B cell (primary cell): ENCODE measurements at regions of chr16 and their contacts with region 1.

Region 1: GRCh38 chr16:85610508-85611332 is 2.4 kb upstream of the GSE1 start:
- DNase-seq: peak; percentile 88
- ATAC-seq: peak; percentile 53
- H3K4me3 ChIP-seq: peak overlapping the region in 4 of 5 experiments; percentile 22 to 71 (median 64)
- H3K4me3 Mint-ChIP-seq: peak overlapping the region; percentile 90
- H3K27ac ChIP-seq: no peak overlapping the region
- H3K27ac Mint-ChIP-seq: peak overlapping the region; percentile 87
- H3K4me1 ChIP-seq: peaks cover 55 to 63% of the 10 kb centered on the region in 2 donors
- H3K4me1 Mint-ChIP-seq: peaks cover 59% of the 10 kb centered on the region
- H3K27me3 ChIP-seq: no peaks in the 10 kb centered on the region
- H3K27me3 Mint-ChIP-seq: no peaks in the 10 kb centered on the region
- CTCF ChIP-seq: peak; percentile 96

Region 2: DNA sequence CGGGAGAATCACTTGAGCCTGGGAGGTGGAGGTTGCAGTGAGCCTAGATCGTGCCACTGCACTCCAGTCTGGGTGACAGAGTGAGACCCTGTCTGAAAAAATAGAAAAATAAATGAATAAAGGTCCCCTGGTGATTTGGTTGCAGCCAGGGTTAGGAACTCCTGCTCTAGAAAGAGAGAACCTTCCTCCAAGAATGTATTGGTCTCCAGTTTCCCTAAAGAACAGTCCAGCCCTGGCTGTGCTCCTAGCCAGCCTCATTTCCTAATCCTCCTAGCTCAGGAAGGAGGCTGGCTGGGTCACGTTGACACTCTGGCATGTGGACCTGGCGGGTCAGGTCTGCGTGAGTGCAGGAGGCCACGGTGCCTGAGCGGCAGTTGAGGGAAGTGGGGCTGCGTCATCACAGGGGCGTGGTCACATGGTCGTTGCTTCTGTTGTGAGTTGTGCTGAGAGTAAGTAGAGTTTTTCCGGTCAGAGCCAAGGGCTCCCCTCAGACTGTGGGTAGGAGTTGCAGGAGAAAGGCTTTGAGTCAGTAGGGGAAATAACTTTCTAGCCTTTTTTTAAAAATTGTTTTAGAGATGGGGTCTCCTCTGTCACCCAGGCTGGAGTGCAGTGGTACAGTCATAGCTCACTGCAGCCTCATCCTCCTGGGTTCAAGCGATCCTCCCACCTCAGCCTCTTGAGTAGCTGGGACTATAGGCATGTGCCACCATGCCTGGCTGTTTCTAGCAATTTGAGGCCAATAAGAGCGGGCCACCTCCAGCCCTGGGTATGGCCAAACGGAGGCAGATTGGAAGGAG is 304.5 kb before region 1 on chr16:
- CTCF ChIA-PET with region 1: interaction called, 8 read pairs
- POLR2A ChIA-PET with region 1: no interaction called
- intact Hi-C with region 1: loop called (anchors 1 kb)
- DNase-seq: peak; percentile 91
- ATAC-seq: peak; percentile 71
- H3K4me3 ChIP-seq: peak overlapping the region in 1 of 5 experiments; percentile 22
- H3K4me3 Mint-ChIP-seq: peak overlapping the region; percentile 61
- H3K27ac ChIP-seq: peak overlapping the region; percentile 51
- H3K27ac Mint-ChIP-seq: peak overlapping the region; percentile 91
- H3K4me1 ChIP-seq: peaks cover 77 to 84% of the 10 kb centered on the region in 2 donors
- H3K4me1 Mint-ChIP-seq: peaks cover 59% of the 10 kb centered on the region
- H3K27me3 ChIP-seq: peaks cover 0 to 5% (median 0%) of the 10 kb centered on the region in 4 experiments
- H3K27me3 Mint-ChIP-seq: no peaks in the 10 kb centered on the region
- CTCF ChIP-seq: no peak

Region 3: DNA sequence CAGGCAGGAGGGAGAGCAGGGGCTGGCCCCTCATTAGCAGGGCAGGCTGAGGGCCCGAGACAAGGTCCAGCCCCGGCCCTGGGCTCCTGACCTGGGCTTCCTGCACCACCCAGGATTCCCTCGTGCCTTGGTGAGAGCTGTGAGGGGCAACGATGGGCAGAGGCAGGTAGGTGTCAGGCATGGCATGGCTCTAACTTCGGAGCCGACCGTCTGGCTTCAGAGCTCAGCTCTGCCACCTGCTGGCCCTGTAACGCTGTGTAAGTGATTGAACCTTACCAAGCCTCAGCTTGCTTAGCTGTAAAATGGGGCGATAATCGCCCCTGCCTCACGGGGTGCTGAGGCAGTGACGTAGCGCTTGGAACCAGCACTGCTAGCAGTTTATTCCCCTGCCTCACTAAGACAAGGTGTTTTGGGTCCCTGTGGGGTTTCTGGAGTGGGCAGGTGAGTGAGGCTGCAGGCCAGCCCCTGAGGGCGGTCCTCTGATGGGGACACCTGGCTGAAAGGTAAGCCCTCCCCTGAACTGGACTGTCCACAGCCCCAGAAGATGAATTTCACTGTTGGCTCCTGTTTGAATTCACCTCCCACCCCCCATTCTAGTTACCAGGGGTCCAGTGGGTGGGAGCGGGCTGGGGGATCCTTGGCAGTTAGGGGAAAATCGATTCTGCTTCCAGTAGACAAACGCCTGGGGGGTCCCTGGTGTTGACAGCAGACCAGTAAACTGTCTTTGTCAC is 182.4 kb before region 1 on chr16:
- CTCF ChIA-PET with region 1: interaction called, 46 read pairs
- POLR2A ChIA-PET with region 1: no interaction called
- intact Hi-C with region 1: no loop called
- DNase-seq: peak; percentile 62
- ATAC-seq: peak; percentile 76
- H3K4me3 ChIP-seq: no peak overlapping the region
- H3K4me3 Mint-ChIP-seq: no peak overlapping the region
- H3K27ac ChIP-seq: no peak overlapping the region
- H3K27ac Mint-ChIP-seq: no peak overlapping the region
- H3K4me1 ChIP-seq: no peaks in the 10 kb centered on the region
- H3K4me1 Mint-ChIP-seq: no peaks in the 10 kb centered on the region
- H3K27me3 ChIP-seq: peaks cover 0 to 8% (median 0%) of the 10 kb centered on the region in 4 experiments
- H3K27me3 Mint-ChIP-seq: peaks cover 24% of the 10 kb centered on the region
- CTCF ChIP-seq: peak; percentile 69

Region 4: DNA sequence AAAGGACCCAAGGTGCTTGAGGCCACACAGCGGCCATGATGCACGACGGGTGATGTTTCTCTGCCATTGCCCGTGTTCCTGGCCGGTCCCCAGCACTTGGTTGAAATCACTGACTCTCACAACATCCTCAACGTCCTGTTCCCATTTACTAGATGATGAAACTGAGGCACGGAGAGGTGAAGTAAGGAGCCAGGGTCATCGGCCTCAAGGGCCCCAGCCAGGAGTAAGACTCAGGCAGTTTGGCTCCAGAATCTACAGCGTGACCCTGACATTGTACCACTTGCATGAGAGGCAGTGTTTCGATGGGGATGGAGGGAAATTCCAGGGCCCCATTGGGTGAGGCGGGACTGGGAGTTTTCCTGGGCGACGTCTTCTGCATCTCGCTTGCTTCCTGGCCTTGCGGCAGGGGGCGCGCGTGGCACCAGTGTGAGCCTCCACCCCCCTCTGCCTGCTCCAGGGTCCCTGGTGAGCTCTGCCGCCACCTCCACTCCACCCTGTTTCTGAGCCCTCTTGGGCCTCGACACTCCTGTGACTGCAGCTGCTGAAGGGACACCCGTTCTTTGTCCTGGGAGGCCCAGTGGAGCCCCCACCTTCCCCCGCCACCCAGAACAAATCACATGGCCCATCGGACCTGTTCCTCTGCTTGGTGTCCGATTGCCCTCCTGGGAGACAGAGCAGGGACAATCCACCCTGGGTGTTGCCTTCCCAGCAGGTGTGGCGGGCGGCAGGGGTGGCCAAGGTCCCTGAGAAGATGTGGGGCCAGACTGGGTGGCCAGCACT is 130.6 kb before region 1 on chr16:
- CTCF ChIA-PET with region 1: interaction called, 81 read pairs
- POLR2A ChIA-PET with region 1: interaction called, 4 read pairs
- intact Hi-C with region 1: loop called (anchors 1 kb)
- DNase-seq: peak; percentile 72
- ATAC-seq: peak; percentile 70
- H3K4me3 ChIP-seq: no peak overlapping the region
- H3K4me3 Mint-ChIP-seq: peak overlapping the region; percentile 32
- H3K27ac ChIP-seq: no peak overlapping the region
- H3K27ac Mint-ChIP-seq: no peak overlapping the region
- H3K4me1 ChIP-seq: peaks cover 11 to 14% of the 10 kb centered on the region in 2 donors
- H3K4me1 Mint-ChIP-seq: peaks cover 15% of the 10 kb centered on the region
- H3K27me3 ChIP-seq: peaks cover 0 to 18% (median 7%) of the 10 kb centered on the region in 4 experiments
- H3K27me3 Mint-ChIP-seq: peaks cover 16% of the 10 kb centered on the region
- CTCF ChIP-seq: peak; percentile 69

Region 5: GRCh38 chr16:85554112-85554813 is 56.5 kb before region 1 on chr16:
- CTCF ChIA-PET with region 1: interaction called, 46 read pairs
- POLR2A ChIA-PET with region 1: interaction called, 16 read pairs
- intact Hi-C with region 1: loop called (anchors 1 kb)
- DNase-seq: peak; percentile 92
- ATAC-seq: peak; percentile 61
- H3K4me3 ChIP-seq: peak overlapping the region; percentile 46 to 99 (median 87)
- H3K4me3 Mint-ChIP-seq: peak overlapping the region; percentile 92
- H3K27ac ChIP-seq: peak overlapping the region; percentile 79 to 92
- H3K27ac Mint-ChIP-seq: peak overlapping the region; percentile 95
- H3K4me1 ChIP-seq: peaks cover 21 to 33% of the 10 kb centered on the region in 2 donors
- H3K4me1 Mint-ChIP-seq: peaks cover 38% of the 10 kb centered on the region
- H3K27me3 ChIP-seq: no peaks in the 10 kb centered on the region
- H3K27me3 Mint-ChIP-seq: no peaks in the 10 kb centered on the region
- CTCF ChIP-seq: no peak

Region 6: GRCh38 chr16:85665929-85666328 is 55.2 kb after region 1 on chr16:
- CTCF ChIA-PET with region 1: no interaction called
- POLR2A ChIA-PET with region 1: no interaction called
- intact Hi-C with region 1: no loop called
- DNase-seq: no peak
- ATAC-seq: no peak
- H3K4me3 ChIP-seq: no peak overlapping the region
- H3K4me3 Mint-ChIP-seq: no peak overlapping the region
- H3K27ac ChIP-seq: no peak overlapping the region
- H3K27ac Mint-ChIP-seq: no peak overlapping the region
- H3K4me1 ChIP-seq: no peaks in the 10 kb centered on the region
- H3K4me1 Mint-ChIP-seq: no peaks in the 10 kb centered on the region
- H3K27me3 ChIP-seq: no peaks in the 10 kb centered on the region
- H3K27me3 Mint-ChIP-seq: no peaks in the 10 kb centered on the region
- CTCF ChIP-seq: no peak

Region 7: GRCh38 chr16:85750827-85751697 is 140.3 kb after region 1 on chr16 and contains the start of gene C16orf74:
- CTCF ChIA-PET with region 1: interaction called, 4 read pairs
- POLR2A ChIA-PET with region 1: interaction called, 9 read pairs
- intact Hi-C with region 1: loop called (anchors 2 kb)
- DNase-seq: peak; percentile 71
- ATAC-seq: peak; percentile 56
- H3K4me3 ChIP-seq: peak within 1 kb of the TSS; percentile 16 to 81 (median 76)
- H3K4me3 Mint-ChIP-seq: peak within 1 kb of the TSS; percentile 97
- H3K27ac ChIP-seq: peak within 1 kb of the TSS; percentile 58 to 68
- H3K27ac Mint-ChIP-seq: peak within 1 kb of the TSS; percentile 100
- H3K4me1 ChIP-seq: peaks cover 80 to 94% of the 10 kb centered on the region in 2 donors
- H3K4me1 Mint-ChIP-seq: peaks cover 72% of the 10 kb centered on the region
- H3K27me3 ChIP-seq: no peaks in the 10 kb centered on the region
- H3K27me3 Mint-ChIP-seq: no peaks in the 10 kb centered on the region
- CTCF ChIP-seq: no peak
- total RNA-seq, gene C16orf74: 83.3 and 92.6 TPM in 2 replicates

Region 8: DNA sequence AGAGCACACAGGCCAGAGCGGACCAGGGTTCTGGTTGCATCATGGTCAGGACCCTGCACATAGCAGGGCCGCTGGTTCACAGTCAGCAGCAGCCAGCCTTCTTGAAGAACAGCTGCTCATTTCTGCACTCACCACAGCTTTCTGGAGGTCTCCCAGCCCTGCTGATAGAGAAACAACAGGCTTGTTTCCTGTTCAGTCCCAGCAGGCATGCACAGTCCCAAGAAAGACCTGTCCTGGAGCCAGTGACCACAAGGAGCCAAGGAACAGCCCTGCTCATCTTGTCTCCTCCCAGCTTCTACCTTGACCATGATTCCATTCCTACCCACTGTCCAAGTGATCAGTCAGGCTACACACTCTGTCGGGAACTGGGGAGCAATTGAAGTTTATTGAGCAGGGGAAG is 743.9 kb after region 1 on chr16:
- CTCF ChIA-PET with region 1: no interaction called
- POLR2A ChIA-PET with region 1: no interaction called
- intact Hi-C with region 1: no loop called
- DNase-seq: no peak
- ATAC-seq: no peak
- H3K4me3 ChIP-seq: no peak overlapping the region
- H3K4me3 Mint-ChIP-seq: no peak overlapping the region
- H3K27ac ChIP-seq: no peak overlapping the region
- H3K27ac Mint-ChIP-seq: no peak overlapping the region
- H3K4me1 ChIP-seq: no peaks in the 10 kb centered on the region
- H3K4me1 Mint-ChIP-seq: no peaks in the 10 kb centered on the region
- H3K27me3 ChIP-seq: peaks cover 0 to 14% (median 0%) of the 10 kb centered on the region in 4 experiments
- H3K27me3 Mint-ChIP-seq: peaks cover 56% of the 10 kb centered on the region
- CTCF ChIP-seq: no peak